HEK293 (cell line): ENCODE measurements at regions of chr6 and their contacts with region 1.

Region 1: DNA sequence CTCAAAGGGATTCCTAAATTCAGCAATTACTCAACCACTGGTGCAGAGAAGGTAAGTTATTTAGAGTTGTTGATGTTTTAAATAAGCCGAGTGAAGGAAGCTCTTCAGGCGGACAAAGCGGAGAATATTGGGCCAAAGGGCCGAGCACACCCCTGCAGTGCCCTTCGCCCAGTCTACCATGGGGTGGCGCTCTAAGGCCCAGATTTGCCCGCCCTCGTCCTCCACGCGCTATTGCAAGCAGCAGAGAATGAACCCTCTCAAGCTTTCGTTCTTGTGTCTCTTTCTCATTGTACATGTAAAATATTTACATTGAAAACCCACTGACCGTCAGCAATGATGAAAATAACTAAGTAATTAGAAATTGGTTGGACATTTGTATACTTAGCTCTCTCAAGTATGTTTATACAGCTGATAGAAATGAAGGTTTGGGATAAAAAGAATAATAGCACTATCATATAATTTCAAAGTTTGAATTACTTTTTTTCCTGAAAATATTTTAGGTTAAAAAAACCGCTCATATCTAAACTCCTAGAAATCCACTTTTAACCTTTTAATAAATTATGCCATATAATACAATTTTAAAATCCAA is 195.0 kb upstream of the CEP162 start:
- H3K4me3 ChIP-seq: no peak overlapping the region
- H3K27ac ChIP-seq: no peak overlapping the region
- H3K4me1 ChIP-seq: peaks cover 11% of the 10 kb centered on the region
- CTCF ChIP-seq: peak; percentile 54; the same call in 1 of the 2 replicates

Region 2: DNA sequence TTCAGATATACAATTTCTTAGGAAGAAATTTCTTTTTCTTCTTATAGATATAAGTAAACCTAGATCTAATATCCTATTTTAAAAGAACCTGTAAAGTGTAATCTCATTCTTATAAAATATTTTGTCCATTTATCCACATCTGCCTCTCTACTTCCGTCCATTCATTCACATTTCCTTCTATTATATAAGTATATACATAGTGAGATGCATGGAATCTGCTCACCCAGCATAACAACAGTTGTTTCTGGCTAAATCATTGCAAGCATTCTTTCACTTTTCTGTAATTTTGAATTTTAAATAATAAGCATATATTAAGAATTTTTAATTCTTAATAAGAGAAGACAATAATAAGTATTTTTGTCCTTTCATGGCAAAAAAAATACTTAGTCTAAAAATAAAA is 240.5 kb before region 1 on chr6:
- CTCF ChIA-PET with region 1: no interaction called
- POLR2A ChIA-PET with region 1: no interaction called
- H3K4me3 ChIP-seq: no peak overlapping the region
- H3K27ac ChIP-seq: no peak overlapping the region
- H3K4me1 ChIP-seq: no peaks in the 10 kb centered on the region
- CTCF ChIP-seq: no peak

Region 3: GRCh38 chr6:84243240-84243639 is 179.2 kb before region 1 on chr6:
- CTCF ChIA-PET with region 1: no interaction called
- POLR2A ChIA-PET with region 1: no interaction called
- H3K4me3 ChIP-seq: no peak overlapping the region
- H3K27ac ChIP-seq: no peak overlapping the region
- H3K4me1 ChIP-seq: no peaks in the 10 kb centered on the region
- CTCF ChIP-seq: 0 out of 2 replicates have a peak, but pooled peaks have one; percentile 11

Region 4: GRCh38 chr6:84442208-84442607 is 19.7 kb after region 1 on chr6:
- CTCF ChIA-PET with region 1: interaction called, 13 read pairs
- POLR2A ChIA-PET with region 1: interaction called, 3 read pairs
- H3K4me3 ChIP-seq: no peak overlapping the region
- H3K27ac ChIP-seq: no peak overlapping the region
- H3K4me1 ChIP-seq: no peaks in the 10 kb centered on the region
- CTCF ChIP-seq: no peak

Region 5: GRCh38 chr6:84752118-84752850 is 329.8 kb after region 1 on chr6:
- CTCF ChIA-PET with region 1: interaction called, 13 read pairs
- POLR2A ChIA-PET with region 1: no interaction called
- H3K4me3 ChIP-seq: no peak overlapping the region
- H3K27ac ChIP-seq: no peak overlapping the region
- H3K4me1 ChIP-seq: no peaks in the 10 kb centered on the region
- CTCF ChIP-seq: no peak

Region 6: GRCh38 chr6:84967389-84967788 is 544.9 kb after region 1 on chr6:
- CTCF ChIA-PET with region 1: interaction called, 32 read pairs
- POLR2A ChIA-PET with region 1: no interaction called
- H3K4me3 ChIP-seq: no peak overlapping the region
- H3K27ac ChIP-seq: no peak overlapping the region
- H3K4me1 ChIP-seq: no peaks in the 10 kb centered on the region
- CTCF ChIP-seq: peak; percentile 85

Region 7: GRCh38 chr6:85323435-85324040 is 901.1 kb after region 1 on chr6:
- CTCF ChIA-PET with region 1: interaction called, 10 read pairs
- POLR2A ChIA-PET with region 1: no interaction called
- H3K4me3 ChIP-seq: no peak overlapping the region
- H3K27ac ChIP-seq: no peak overlapping the region
- H3K4me1 ChIP-seq: no peaks in the 10 kb centered on the region
- CTCF ChIP-seq: peak; percentile 70